Endothelial cell of umbilical vein (primary cell): ENCODE measurements at regions of chr22 and their contacts with region 1.

Region 1: DNA sequence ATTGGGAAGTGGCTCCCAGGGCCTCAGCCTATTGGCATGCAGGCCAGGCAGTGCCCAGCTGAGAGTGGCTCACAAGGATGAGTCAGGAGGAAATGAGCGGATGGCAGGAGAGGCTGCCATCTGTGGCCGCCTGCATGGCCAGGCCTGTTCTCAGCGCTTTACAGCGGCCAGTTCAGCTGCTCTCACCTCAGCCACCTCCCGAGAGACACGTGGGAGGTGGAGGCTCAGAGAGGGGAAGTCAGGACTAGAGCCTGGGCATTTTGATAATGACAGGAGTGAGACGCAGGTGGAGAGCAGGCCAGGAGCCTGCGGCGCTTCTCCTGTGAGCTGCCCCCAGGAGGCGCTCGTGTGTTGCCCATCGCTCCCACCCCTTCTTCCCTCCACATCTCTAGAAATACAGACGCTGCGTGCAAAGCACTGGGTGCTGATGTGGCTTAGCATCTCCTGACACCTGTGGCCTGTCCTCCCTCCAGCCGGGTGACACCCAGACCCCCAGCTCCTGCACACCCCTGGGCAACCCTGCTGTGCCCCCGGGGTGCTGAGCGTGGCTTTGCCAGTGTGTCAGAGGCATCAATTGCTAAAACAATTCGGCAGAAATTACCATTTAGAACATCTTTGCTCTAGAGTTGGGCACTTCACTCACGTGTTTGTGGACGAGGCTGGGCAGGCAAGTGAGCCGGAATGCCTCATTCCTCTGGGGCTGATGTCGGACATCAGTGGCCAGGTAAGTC is 21.4 kb upstream of the PANX2 start:
- DNase-seq: peak; percentile 58
- H3K4me3 ChIP-seq: no peak overlapping the region
- H3K27ac ChIP-seq: no peak overlapping the region
- H3K4me1 ChIP-seq: no peaks in the 10 kb centered on the region
- H3K27me3 ChIP-seq: no peaks in the 10 kb centered on the region
- CTCF ChIP-seq: peak; percentile 77 to 88
- POLR2A ChIP-seq: no peak

Region 2: DNA sequence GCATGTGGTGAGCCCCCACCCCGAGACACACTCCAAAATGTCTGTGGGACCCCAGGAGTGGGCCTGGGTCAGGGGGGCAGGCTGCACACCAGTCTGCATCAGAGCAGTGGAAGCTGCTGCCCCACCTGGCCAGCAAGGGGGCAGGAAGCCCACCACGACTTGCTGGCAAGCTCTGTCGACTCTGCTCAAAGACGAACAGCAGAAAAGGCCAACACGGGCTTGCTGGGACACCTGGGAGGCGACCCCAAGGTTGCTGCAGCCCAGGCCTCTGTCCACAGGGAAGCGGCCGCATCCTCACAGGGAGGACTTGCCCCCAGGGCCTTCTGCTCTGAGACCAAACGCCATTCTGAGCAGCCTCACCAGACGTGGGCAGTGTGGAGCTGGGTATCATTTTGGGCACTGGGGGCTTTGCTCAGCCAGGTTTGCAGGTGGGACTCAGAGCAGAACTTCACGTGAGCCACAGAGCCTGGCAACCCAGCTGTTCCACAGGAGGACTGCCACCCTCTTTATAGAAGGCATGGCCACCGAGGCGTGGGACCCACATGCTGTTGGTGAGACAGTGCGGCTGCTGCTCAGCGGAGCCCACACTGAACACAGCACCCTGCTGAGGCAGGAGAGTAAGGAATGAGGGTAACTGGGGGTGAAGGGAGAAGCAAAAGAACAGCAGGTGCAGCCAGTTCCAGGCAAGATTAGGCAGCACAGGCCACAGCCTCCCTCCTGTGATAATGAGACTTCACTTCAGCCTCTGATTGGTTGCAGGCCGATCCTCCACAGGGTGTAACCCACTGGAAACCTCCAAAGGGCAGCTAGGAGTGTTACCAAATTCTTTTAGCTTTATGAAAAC is 147.5 kb before region 1 on chr22:
- CTCF ChIA-PET with region 1: no interaction called
- POLR2A ChIA-PET with region 1: no interaction called
- dilution Hi-C with region 1: no loop called
- intact Hi-C with region 1: no loop called
- DNase-seq: no peak
- H3K4me3 ChIP-seq: no peak overlapping the region
- H3K27ac ChIP-seq: no peak overlapping the region
- H3K4me1 ChIP-seq: no peaks in the 10 kb centered on the region
- H3K27me3 ChIP-seq: peaks cover 0 to 2% of the 10 kb centered on the region in 2 experiments
- CTCF ChIP-seq: no peak
- POLR2A ChIP-seq: no peak

Region 3: DNA sequence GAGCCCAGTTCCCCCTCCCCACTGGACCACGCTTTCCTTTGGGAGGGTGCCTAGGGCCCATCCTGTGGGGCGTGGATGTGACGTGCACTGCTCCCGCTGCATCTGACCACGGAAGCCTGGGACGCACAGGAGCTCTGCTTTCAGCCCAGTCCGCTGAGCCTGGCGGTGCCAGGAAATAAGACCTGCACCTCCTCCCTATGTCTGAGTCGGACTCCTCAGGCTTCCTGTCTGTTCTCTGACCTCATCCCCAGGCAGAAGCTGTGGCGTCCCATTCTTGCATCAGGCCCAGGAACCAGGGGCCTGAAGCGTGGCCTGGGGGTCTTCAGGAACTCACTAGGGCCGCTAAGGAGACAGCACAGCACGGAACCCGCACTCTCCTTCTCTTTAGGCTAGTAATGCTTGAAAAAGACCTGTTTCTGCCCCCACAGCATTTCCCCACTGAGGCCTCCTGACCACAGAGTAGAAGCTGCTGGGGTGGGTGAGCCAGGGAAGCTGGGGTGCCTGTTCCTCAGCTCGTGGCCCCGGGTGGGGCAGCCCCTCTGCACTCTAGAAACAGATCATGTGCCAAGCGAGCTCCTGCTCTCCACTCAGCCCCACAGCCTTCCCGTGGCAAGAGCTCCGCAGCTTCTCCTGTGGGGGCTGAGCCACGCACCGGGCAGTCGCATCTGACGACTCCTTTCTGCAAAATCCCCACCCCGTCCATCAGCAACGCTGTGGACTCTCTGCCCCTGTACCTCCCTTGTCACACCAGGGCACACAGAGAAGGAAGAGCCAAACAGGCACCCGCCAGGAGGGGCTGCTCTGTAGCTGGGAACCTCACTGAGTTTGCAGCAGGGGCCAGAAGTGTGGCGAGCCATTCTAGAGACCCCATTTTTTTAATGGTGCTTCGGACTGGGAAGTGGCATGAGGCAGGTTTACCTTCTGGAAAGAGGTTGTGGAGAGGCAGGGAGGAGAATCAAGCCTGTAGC is 36.7 kb before region 1 on chr22:
- CTCF ChIA-PET with region 1: interaction called, 7 read pairs
- POLR2A ChIA-PET with region 1: no interaction called
- dilution Hi-C with region 1: no loop called
- intact Hi-C with region 1: loop called (anchors 1 kb)
- DNase-seq: peak; percentile 90
- H3K4me3 ChIP-seq: no peak overlapping the region
- H3K27ac ChIP-seq: peak overlapping the region; percentile 96
- H3K4me1 ChIP-seq: peaks cover 47% of the 10 kb centered on the region
- H3K27me3 ChIP-seq: no peaks in the 10 kb centered on the region
- CTCF ChIP-seq: no peak
- POLR2A ChIP-seq: peak; percentile 56

Region 4: GRCh38 chr22:50118557-50119168 is 30.5 kb before region 1 on chr22:
- CTCF ChIA-PET with region 1: interaction called, 10 read pairs
- POLR2A ChIA-PET with region 1: no interaction called
- dilution Hi-C with region 1: no loop called
- intact Hi-C with region 1: no loop called
- DNase-seq: peak; percentile 98
- H3K4me3 ChIP-seq: no peak overlapping the region
- H3K27ac ChIP-seq: peak overlapping the region; percentile 93
- H3K4me1 ChIP-seq: peaks cover 57% of the 10 kb centered on the region
- H3K27me3 ChIP-seq: no peaks in the 10 kb centered on the region
- CTCF ChIP-seq: no peak
- POLR2A ChIP-seq: peak; percentile 75

Region 5: GRCh38 chr22:50136581-50137015 is 12.6 kb before region 1 on chr22:
- CTCF ChIA-PET with region 1: no interaction called
- POLR2A ChIA-PET with region 1: no interaction called
- dilution Hi-C with region 1: no loop called
- intact Hi-C with region 1: no loop called
- DNase-seq: no peak
- H3K4me3 ChIP-seq: no peak overlapping the region
- H3K27ac ChIP-seq: no peak overlapping the region
- H3K4me1 ChIP-seq: no peaks in the 10 kb centered on the region
- H3K27me3 ChIP-seq: no peaks in the 10 kb centered on the region
- CTCF ChIP-seq: no peak
- POLR2A ChIP-seq: no peak

Region 6: DNA sequence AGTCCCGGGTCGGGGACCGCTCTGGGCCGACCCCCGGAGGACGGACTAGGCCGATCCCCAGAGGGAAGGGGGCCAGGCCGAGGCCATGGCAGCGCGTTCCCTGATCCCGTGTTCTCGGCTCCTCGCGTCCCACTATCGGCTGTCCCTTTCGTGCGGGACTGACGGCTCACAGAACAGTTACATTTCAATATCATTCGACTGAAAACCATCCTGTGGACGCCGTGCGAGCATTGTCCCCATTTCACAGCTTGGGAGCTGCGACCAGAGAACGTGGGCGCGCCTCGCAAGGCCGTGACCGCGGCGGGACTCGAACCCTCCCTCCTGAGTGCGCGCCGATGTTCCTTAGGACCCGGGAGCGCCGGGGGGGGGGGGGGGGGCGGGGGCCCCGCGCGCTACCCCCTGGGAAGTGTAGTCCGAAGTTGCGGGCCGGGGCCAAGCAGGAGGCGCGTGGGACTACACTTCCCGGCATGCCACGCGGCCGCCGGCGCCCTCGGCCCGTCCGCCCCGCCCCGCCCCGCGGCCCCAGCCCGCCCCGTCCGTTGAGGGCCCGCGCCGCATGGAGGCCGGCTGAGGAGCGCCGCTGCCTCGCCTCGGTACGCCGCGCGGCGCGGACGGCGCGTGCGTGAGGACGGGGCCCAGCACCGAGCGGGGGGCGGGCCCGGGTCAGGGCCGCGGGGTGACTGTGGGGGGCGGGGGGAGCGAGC is 36.4 kb after region 1 on chr22 and contains the start of gene TRABD:
- CTCF ChIA-PET with region 1: interaction called, 19 read pairs
- POLR2A ChIA-PET with region 1: interaction called, 3 read pairs
- dilution Hi-C with region 1: no loop called
- intact Hi-C with region 1: no loop called
- DNase-seq: peak; percentile 84
- H3K4me3 ChIP-seq: peak within 1 kb of the TSS; percentile 41 to 77 (median 42)
- H3K27ac ChIP-seq: peak within 1 kb of the TSS; percentile 10
- H3K4me1 ChIP-seq: peaks cover 31% of the 10 kb centered on the region
- H3K27me3 ChIP-seq: no peaks in the 10 kb centered on the region
- CTCF ChIP-seq: no peak
- POLR2A ChIP-seq: no peak
- total RNA-seq, gene TRABD: 46.8 and 48.9 TPM in 2 replicates

Region 7: DNA sequence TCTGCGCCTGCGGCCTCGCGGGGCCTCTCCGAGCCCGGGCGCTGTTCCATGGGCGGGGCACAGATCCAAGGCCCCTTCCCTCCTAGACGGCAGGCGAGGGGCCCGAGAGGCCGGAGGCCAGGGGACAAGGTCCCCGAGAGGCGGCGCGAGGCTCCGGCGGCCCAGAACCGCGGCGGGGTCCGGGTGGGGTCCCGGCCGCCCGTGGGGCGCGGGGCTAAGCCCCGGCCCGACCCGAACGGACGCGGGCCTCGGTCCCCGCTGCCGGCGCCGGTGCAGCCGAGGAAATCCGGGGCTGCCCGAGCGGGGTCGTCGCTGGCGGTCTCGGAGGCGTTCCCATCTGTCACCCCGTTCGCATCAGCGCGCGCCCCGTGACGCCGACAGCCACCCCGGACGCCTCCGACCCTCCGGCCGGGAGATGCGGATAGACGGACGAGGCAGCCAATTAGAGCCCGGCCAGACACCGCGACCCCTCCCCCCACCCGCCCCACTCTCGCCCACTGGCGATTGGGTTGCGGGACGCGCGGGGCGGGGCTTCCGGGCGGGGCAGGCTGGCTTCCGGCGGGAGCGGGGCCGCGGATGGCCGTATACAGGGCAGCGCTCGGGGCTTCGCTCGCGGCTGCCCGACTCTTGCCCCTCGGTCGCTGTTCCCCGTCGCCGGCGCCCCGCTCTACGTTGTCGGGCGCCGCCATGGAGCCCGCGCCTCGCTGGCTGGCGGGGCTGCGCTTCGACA is 51.5 kb after region 1 on chr22 and contains the start of gene SELENOO:
- CTCF ChIA-PET with region 1: no interaction called
- POLR2A ChIA-PET with region 1: no interaction called
- dilution Hi-C with region 1: no loop called
- intact Hi-C with region 1: loop called (anchors 2 kb)
- DNase-seq: peak; percentile 80
- H3K4me3 ChIP-seq: peak within 1 kb of the TSS; percentile 58 to 85 (median 75)
- H3K27ac ChIP-seq: peak within 1 kb of the TSS; percentile 60
- H3K4me1 ChIP-seq: peaks cover 18% of the 10 kb centered on the region
- H3K27me3 ChIP-seq: no peaks in the 10 kb centered on the region
- CTCF ChIP-seq: no peak
- POLR2A ChIP-seq: peak; percentile 83
- total RNA-seq, gene SELENOO: 24.1 and 28.0 TPM in 2 replicates

Region 8: GRCh38 chr22:50209893-50210292 is 60.7 kb after region 1 on chr22:
- CTCF ChIA-PET with region 1: interaction called, 13 read pairs
- POLR2A ChIA-PET with region 1: no interaction called
- dilution Hi-C with region 1: no loop called
- intact Hi-C with region 1: loop called (anchors 1 kb)
- DNase-seq: peak; percentile 56
- H3K4me3 ChIP-seq: no peak overlapping the region
- H3K27ac ChIP-seq: no peak overlapping the region
- H3K4me1 ChIP-seq: peaks cover 13% of the 10 kb centered on the region
- H3K27me3 ChIP-seq: no peaks in the 10 kb centered on the region
- CTCF ChIP-seq: peak; percentile 84 to 87
- POLR2A ChIP-seq: no peak